Dorsolateral prefrontal cortex (tissue), 120 donors: ENCODE measurements at regions of chr2 and their contacts with region 1.

Region 1: GRCh38 chr2:151357359-151357758 is at the start of gene TNFAIP6:
- DNase-seq: no peak
- H3K4me3 ChIP-seq: peak within 1 kb of the TSS in 36 of 59 donors; percentile 3 to 62 (median 19)
- H3K27ac ChIP-seq: peak within 1 kb of the TSS in 3 of 59 donors; percentile 19 to 48 (median 45)
- H3K27me3 ChIP-seq: no peaks in the 10 kb centered on the region
- CTCF ChIP-seq: no peak
- total RNA-seq, gene TNFAIP6: 0.39 to 6.6 (median 1.5) TPM in 116 of 120 experiments, not detected in the others

Region 2: GRCh38 chr2:151197184-151198108 is 159.9 kb before region 1 on chr2:
- intact Hi-C with region 1: no loop called
- DNase-seq: no peak
- H3K4me3 ChIP-seq: no peak overlapping the region
- H3K27ac ChIP-seq: no peak overlapping the region
- H3K27me3 ChIP-seq: peaks cover 0 to 5% (median 0%) of the 10 kb centered on the region in 45 donors
- CTCF ChIP-seq: no peak

Region 3: GRCh38 chr2:151261231-151261976 is 96.0 kb before region 1 on chr2 and contains the start of gene RBM43:
- intact Hi-C with region 1: loop called in 1 of 2 experiments (anchors 10 kb)
- DNase-seq: peak; percentile 23 to 84 (median 68)
- H3K4me3 ChIP-seq: peak within 1 kb of the TSS; percentile 64 to 97 (median 85)
- H3K27ac ChIP-seq: peak within 1 kb of the TSS; percentile 66 to 97 (median 89)
- H3K27me3 ChIP-seq: no peaks in the 10 kb centered on the region
- CTCF ChIP-seq: peak in 23 of 56 donors; percentile 2 to 39 (median 13)
- total RNA-seq, gene RBM43: 2.0 to 7.1 (median 4.5) TPM

Region 4: DNA sequence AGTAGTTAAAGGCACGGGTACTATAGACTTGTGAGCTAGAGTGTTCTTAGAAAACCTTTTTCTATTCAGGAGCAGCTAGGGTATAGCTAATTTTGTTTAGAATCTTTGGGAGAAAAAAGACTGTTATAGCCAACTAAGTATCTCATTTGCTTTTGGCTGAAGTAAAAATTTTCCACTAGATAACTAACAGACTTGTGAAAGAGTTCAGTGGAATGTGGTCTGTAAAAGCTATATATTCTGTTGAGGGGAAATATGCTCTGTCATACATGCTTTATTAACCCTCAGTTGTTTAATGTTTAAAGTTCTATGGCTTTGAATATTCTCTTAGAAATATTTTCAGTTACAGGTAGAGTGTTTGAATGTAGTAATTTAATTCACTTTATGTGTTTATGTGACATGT is 102.0 kb after region 1 on chr2:
- intact Hi-C with region 1: no loop called
- DNase-seq: no peak
- H3K4me3 ChIP-seq: no peak overlapping the region
- H3K27ac ChIP-seq: no peak overlapping the region
- H3K27me3 ChIP-seq: no peaks in the 10 kb centered on the region
- CTCF ChIP-seq: no peak